ENCODE measurements at regions of chr15 and their contacts with region 1.

Region 1: GRCh38 chr15:76840830-76841460 is 64.2 kb downstream of the SCAPER start:
- DNase-seq: peak; percentile 57
- H3K4me3 ChIP-seq: no peak overlapping the region
- H3K27ac ChIP-seq: no peak overlapping the region
- H3K4me1 ChIP-seq: peaks cover 10% of the 10 kb centered on the region
- H3K27me3 ChIP-seq: no peaks in the 10 kb centered on the region
- CTCF ChIP-seq: peak; percentile 71

Region 2: GRCh38 chr15:76336254-76337058 is 504.5 kb before region 1 on chr15 and contains the start of gene ISL2:
- CTCF ChIA-PET with region 1: no interaction called
- POLR2A ChIA-PET with region 1: no interaction called
- intact Hi-C with region 1: loop called (anchors 10 kb)
- DNase-seq: peak; percentile 95
- H3K4me3 ChIP-seq: peak within 1 kb of the TSS; percentile 48
- H3K27ac ChIP-seq: peak within 1 kb of the TSS; percentile 80
- H3K4me1 ChIP-seq: peaks cover 35% of the 10 kb centered on the region
- H3K27me3 ChIP-seq: peaks cover 39% of the 10 kb centered on the region
- CTCF ChIP-seq: no peak
- total RNA-seq, gene ISL2: 3.8 and 5.5 TPM in 2 replicates

Region 3: DNA sequence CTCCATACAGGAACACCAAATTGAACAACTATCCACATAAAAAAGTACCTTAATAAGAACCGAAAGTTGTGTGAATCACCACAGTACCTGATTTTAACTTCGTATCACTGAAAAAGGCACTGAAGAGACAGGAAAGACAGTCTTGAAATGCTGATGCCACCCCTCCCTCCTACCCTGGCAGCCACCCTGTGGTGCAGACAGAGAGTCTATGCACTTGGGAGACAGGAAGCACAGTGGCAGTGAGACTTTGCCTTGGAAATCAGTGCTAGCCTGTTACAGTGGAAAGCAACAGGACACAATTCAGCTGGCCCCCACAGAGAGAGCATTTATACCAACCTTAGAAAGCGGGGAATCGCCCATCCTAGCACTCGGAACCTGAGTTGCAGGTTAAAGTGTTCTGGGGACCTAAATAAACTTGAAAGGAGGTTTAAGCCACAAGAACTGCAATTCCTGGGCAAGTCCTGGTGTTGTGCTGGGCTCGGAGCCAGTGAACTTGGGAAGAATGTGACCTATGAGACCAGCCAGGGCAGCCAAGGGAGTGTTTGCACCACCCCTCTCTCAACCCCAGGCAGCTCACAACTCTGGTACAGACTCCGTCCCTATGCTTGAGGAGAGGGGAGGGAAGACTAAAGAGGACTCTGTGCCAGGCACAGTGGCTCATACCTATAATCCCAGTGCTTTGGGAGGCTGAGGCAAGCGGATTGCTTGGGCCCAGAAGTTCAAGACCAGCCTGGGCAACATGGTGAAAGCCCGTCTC is 264.2 kb before region 1 on chr15:
- CTCF ChIA-PET with region 1: no interaction called
- POLR2A ChIA-PET with region 1: no interaction called
- intact Hi-C with region 1: no loop called
- DNase-seq: peak; percentile 4
- H3K4me3 ChIP-seq: no peak overlapping the region
- H3K27ac ChIP-seq: no peak overlapping the region
- H3K4me1 ChIP-seq: no peaks in the 10 kb centered on the region
- H3K27me3 ChIP-seq: no peaks in the 10 kb centered on the region
- CTCF ChIP-seq: no peak

Region 4: DNA sequence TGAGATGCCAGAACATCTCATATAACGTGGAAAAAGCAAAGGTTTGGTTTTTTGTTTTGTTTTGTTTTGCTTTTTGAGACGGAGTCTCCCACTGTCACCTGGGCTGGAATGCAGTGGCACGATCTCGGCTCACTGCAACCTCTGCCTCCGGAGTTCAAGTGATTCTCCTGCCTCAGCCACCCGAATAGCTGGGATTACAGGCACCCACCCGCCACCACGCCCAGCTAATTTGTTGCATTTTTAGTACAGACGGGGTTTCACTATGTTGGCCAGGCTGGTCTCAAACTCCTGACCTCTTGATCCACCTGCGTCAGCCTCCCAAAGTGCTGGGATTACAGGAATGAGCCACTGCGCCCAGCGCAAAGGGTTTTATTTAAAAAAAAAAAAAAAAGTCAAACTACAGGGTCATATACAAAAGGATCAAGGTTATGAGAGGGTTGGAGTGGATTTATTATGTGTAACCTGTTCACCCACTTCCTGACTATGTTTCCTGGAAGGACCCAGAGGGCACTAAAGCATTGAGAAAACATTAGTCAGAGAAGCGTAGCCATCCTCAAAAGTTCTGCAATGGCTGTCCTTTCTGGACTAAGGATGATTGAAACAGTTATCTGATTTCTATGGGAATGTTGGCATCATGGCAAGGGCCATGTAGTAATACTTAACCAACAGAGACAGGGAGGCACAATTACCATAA is 71.3 kb after region 1 on chr15:
- CTCF ChIA-PET with region 1: no interaction called
- POLR2A ChIA-PET with region 1: no interaction called
- intact Hi-C with region 1: no loop called
- DNase-seq: no peak
- H3K4me3 ChIP-seq: no peak overlapping the region
- H3K27ac ChIP-seq: no peak overlapping the region
- H3K4me1 ChIP-seq: no peaks in the 10 kb centered on the region
- H3K27me3 ChIP-seq: no peaks in the 10 kb centered on the region
- CTCF ChIP-seq: no peak

Region 5: DNA sequence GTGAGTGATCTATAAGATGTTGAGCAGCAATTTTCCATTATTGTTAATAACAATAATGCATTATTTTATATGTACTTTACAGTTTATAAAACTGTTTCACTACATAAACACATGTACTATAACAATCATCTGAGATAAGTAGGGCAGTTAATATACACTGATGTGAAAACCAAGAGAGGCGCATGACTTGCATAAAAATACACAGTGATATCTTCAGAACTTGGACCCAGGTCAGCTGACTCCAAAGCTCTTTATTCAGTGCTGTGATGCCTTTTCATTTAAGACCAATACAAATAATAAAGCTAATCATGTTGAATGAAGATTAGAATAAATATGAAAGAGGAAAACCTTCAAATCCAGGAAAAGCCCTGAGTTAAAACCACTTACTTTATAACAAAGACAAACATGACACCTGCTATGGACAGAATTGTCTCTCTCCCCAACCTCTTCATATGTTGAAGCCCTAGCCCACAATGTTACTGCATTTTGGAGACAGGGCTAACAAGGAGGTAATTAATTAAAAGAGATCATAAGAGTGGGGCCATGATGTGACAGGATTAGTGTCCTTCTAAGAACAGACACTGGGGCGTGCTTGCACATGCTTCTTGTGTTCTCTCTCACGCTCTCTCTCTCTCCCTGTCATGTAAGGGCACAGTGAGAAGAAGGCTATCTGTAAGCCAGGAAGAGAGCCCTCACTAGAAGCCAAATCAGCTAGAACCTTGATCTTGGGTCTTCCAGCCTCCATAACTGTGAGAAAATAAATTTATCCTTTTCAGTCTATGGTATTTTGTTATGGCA is 285.8 kb after region 1 on chr15:
- CTCF ChIA-PET with region 1: no interaction called
- POLR2A ChIA-PET with region 1: no interaction called
- intact Hi-C with region 1: no loop called
- DNase-seq: no peak
- H3K4me3 ChIP-seq: no peak overlapping the region
- H3K27ac ChIP-seq: no peak overlapping the region
- H3K4me1 ChIP-seq: no peaks in the 10 kb centered on the region
- H3K27me3 ChIP-seq: no peaks in the 10 kb centered on the region
- CTCF ChIP-seq: no peak